ENCODE measurements at regions of chr7 and their contacts with region 1.

Region 1: GRCh38 chr7:36291387-36292316 is 98.0 kb upstream of the ANLN start:
- DNase-seq: peak; percentile 84 to 90 (median 88)
- ATAC-seq: peak; percentile 98
- H3K4me3 ChIP-seq: no peak overlapping the region
- H3K27ac ChIP-seq: no peak overlapping the region
- H3K4me1 ChIP-seq: 0 out of 5 replicates have a peak, but pooled peaks cover 0 to 1% of the 10 kb centered on the region in 2 experiments
- H3K27me3 ChIP-seq: peaks cover 18 to 45% of the 10 kb centered on the region in 2 experiments
- CTCF ChIP-seq: peak; percentile 97 to 98 (median 98)
- EP300 ChIP-seq: no peak
- POLR2A ChIP-seq: no peak
- RAD21 ChIP-seq: peak; percentile 99 to 100

Region 2: DNA sequence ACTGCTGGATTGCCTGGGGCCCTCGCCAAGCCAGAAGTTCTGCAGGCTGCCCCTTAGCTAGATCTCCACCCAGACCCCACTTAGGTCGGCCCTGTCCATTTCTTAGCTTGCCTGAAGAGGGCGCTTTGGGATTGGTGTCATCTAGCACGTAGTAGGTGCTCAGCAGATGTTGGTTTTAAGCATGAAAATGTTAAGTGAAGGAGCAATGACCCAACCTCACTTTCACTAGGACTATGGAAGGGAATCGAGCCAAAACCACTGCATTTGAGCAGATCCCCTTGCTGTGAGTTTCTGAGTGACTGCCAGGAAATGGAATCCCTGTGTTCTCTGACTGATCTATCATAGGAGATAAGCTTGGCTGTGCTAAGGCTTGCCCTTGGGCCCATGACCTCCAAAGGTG is 270.3 kb before region 1 on chr7:
- CTCF ChIA-PET with region 1: no interaction called
- POLR2A ChIA-PET with region 1: no interaction called
- in situ Hi-C with region 1: no loop called
- intact Hi-C with region 1: loop called (anchors 1 kb)
- DNase-seq: peak in 2 of 4 experiments; percentile 14 to 28
- ATAC-seq: peak; percentile 56; the same call in 2 of the 3 replicates
- H3K4me3 ChIP-seq: no peak overlapping the region
- H3K27ac ChIP-seq: no peak overlapping the region
- H3K4me1 ChIP-seq: no peaks in the 10 kb centered on the region
- H3K27me3 ChIP-seq: peaks cover 17 to 45% of the 10 kb centered on the region in 2 experiments; a peak in 4 of 5 replicates
- CTCF ChIP-seq: peak; percentile 48 to 69 (median 60)
- EP300 ChIP-seq: no peak
- POLR2A ChIP-seq: no peak
- RAD21 ChIP-seq: peak; percentile 23 to 72; a peak in 3 of 4 replicates

Region 3: GRCh38 chr7:36128448-36129047 is 163.1 kb before region 1 on chr7:
- CTCF ChIA-PET with region 1: interaction called, 22 read pairs
- POLR2A ChIA-PET with region 1: no interaction called
- in situ Hi-C with region 1: no loop called
- intact Hi-C with region 1: loop called (anchors 1 kb)
- DNase-seq: peak; percentile 17 to 29 (median 22)
- ATAC-seq: peak; percentile 46; the same call in 1 of the 3 replicates
- H3K4me3 ChIP-seq: no peak overlapping the region
- H3K27ac ChIP-seq: no peak overlapping the region
- H3K4me1 ChIP-seq: no peaks in the 10 kb centered on the region; a peak in 1 of 5 replicates
- H3K27me3 ChIP-seq: peaks cover 0 to 17% of the 10 kb centered on the region in 2 experiments; a peak in 2 of 5 replicates
- CTCF ChIP-seq: peak; percentile 28 to 56 (median 45); a peak in 5 of 6 replicates
- EP300 ChIP-seq: no peak
- POLR2A ChIP-seq: no peak
- RAD21 ChIP-seq: no peak

Region 4: GRCh38 chr7:36487756-36488336 is 196.2 kb after region 1 on chr7:
- CTCF ChIA-PET with region 1: no interaction called
- POLR2A ChIA-PET with region 1: no interaction called
- in situ Hi-C with region 1: no loop called
- intact Hi-C with region 1: loop called (anchors 5 kb)
- DNase-seq: peak in 1 of 4 experiments; percentile 37
- ATAC-seq: peak; percentile 55; the same call in 2 of the 3 replicates
- H3K4me3 ChIP-seq: no peak overlapping the region
- H3K27ac ChIP-seq: no peak overlapping the region
- H3K4me1 ChIP-seq: no peaks in the 10 kb centered on the region
- H3K27me3 ChIP-seq: peaks cover 4 to 17% of the 10 kb centered on the region in 2 experiments; a peak in 3 of 5 replicates
- CTCF ChIP-seq: peak; percentile 54 to 73 (median 57); a peak in 5 of 6 replicates
- EP300 ChIP-seq: no peak
- POLR2A ChIP-seq: no peak
- RAD21 ChIP-seq: peak; percentile 77 to 92

Measured in K562 (cell line).